Caco-2 (cell line): ENCODE measurements at regions of chr3 and their contacts with region 1.

Region 1: DNA sequence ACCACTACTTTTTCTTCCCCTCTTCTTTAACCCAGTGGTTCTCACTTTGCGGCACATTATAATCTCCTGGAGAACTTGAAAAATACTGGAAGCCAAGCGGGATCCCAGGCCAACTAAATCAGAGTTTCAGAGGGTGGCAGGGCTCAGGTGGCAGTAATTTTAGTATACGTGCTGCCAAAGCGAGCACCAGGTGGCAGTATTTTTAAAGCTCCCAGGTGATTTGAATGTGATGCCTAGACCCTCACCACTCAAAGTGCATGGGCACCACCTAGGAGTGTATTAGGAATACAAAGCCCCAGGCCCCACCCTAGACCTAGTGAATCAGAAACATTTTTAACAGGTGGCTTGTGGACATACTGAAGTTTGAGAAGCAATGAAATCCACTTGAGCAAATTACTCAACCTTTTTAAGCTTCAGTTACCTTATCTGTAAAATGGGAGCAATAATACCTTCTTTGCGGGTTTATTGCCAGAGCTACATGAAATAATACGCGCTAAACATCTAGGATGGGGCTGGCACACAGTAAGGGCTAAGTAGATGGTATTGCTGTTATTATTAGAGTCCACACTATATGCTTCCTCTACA is 8.3 kb downstream of the B3GALNT1 start:
- DNase-seq: peak; percentile 45 to 51
- H3K4me3 ChIP-seq: no peak overlapping the region
- H3K4me3 Mint-ChIP-seq: no peak overlapping the region
- H3K27ac Mint-ChIP-seq: no peak overlapping the region
- H3K4me1 ChIP-seq: peaks cover 17% of the 10 kb centered on the region
- H3K4me1 Mint-ChIP-seq: peaks cover 7% of the 10 kb centered on the region
- H3K27me3 ChIP-seq: no peaks in the 10 kb centered on the region
- H3K27me3 Mint-ChIP-seq: no peaks in the 10 kb centered on the region
- CTCF ChIP-seq: peak; percentile 52 to 60

Region 2: DNA sequence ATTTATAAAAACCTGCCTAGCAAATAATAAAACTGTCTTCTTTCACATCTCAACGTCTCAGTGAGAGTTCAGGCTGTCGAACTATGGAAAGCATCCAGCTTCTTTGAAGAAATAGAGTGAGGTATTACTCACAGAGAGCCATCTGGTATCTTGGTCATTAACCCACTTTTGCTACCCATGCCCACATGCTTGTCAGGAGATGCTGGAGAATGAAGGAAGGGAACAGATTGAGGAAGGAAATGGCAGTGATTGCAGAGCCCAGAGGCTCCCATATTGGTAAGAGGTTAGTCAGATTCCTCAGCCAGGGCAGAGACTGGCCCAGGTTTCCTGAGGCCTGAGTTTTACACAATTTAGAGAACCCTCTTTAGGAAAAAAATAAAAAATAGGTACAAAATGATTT is 110.8 kb before region 1 on chr3:
- CTCF ChIA-PET with region 1: no interaction called
- POLR2A ChIA-PET with region 1: no interaction called
- intact Hi-C with region 1: no loop called
- DNase-seq: no peak
- H3K4me3 ChIP-seq: no peak overlapping the region
- H3K4me3 Mint-ChIP-seq: no peak overlapping the region
- H3K27ac Mint-ChIP-seq: no peak overlapping the region
- H3K4me1 ChIP-seq: no peaks in the 10 kb centered on the region
- H3K4me1 Mint-ChIP-seq: no peaks in the 10 kb centered on the region
- H3K27me3 ChIP-seq: no peaks in the 10 kb centered on the region
- H3K27me3 Mint-ChIP-seq: no peaks in the 10 kb centered on the region
- CTCF ChIP-seq: no peak

Region 3: DNA sequence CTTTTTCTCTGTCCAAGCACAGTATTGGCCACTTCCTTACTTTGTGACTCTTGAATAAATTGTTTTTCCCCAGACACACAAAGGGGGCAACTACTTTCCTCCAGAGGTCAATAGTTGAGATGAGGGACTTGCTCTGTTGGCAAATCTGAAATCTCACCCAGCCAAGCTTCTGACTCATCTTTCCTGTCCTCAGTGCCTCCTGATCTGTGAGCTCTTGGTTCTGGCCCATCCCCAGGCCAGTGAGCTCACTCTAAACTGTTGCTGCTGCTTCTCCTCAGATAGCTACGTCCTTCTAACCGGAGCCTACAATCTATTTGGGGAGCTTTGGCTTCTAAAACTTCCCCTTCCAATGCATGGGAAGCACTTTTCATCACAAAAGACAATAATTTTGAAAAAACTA is 74.2 kb after region 1 on chr3:
- CTCF ChIA-PET with region 1: no interaction called
- POLR2A ChIA-PET with region 1: no interaction called
- intact Hi-C with region 1: loop called (anchors 1 kb)
- DNase-seq: no peak
- H3K4me3 ChIP-seq: no peak overlapping the region
- H3K4me3 Mint-ChIP-seq: no peak overlapping the region
- H3K27ac Mint-ChIP-seq: no peak overlapping the region
- H3K4me1 ChIP-seq: no peaks in the 10 kb centered on the region
- H3K4me1 Mint-ChIP-seq: no peaks in the 10 kb centered on the region
- H3K27me3 ChIP-seq: no peaks in the 10 kb centered on the region
- H3K27me3 Mint-ChIP-seq: no peaks in the 10 kb centered on the region
- CTCF ChIP-seq: no peak

Region 4: GRCh38 chr3:161203485-161204098 is 106.7 kb after region 1 on chr3:
- CTCF ChIA-PET with region 1: no interaction called
- POLR2A ChIA-PET with region 1: no interaction called
- intact Hi-C with region 1: loop called (anchors 10 kb)
- DNase-seq: no peak
- H3K4me3 ChIP-seq: no peak overlapping the region
- H3K4me3 Mint-ChIP-seq: no peak overlapping the region
- H3K27ac Mint-ChIP-seq: no peak overlapping the region
- H3K4me1 ChIP-seq: no peaks in the 10 kb centered on the region
- H3K4me1 Mint-ChIP-seq: no peaks in the 10 kb centered on the region
- H3K27me3 ChIP-seq: no peaks in the 10 kb centered on the region
- H3K27me3 Mint-ChIP-seq: no peaks in the 10 kb centered on the region
- CTCF ChIP-seq: no peak